ENCODE measurements at regions of chr5 and their contacts with region 1.

Region 1: GRCh38 chr5:75236322-75237316 is at the start of gene ANKRD31:
- DNase-seq: peak; percentile 95
- ATAC-seq: peak; percentile 100
- total RNA-seq, gene ANKRD31: 0.05 TPM

Region 2: GRCh38 chr5:74394528-74394915 is 842.1 kb before region 1 on chr5:
- intact Hi-C with region 1: no loop called
- DNase-seq: no peak
- ATAC-seq: peak; percentile 15

Region 3: GRCh38 chr5:75336625-75337339 is 100.2 kb after region 1 on chr5 and contains the start of gene HMGCR:
- intact Hi-C with region 1: loop called (anchors 2 kb)
- DNase-seq: peak; percentile 99
- ATAC-seq: peak; percentile 100
- total RNA-seq, gene HMGCR: 9.6 TPM

Region 4: GRCh38 chr5:75681125-75681830 is 444.7 kb after region 1 on chr5:
- intact Hi-C with region 1: loop called (anchors 5 kb)
- DNase-seq: no peak
- ATAC-seq: no peak

Region 5: DNA sequence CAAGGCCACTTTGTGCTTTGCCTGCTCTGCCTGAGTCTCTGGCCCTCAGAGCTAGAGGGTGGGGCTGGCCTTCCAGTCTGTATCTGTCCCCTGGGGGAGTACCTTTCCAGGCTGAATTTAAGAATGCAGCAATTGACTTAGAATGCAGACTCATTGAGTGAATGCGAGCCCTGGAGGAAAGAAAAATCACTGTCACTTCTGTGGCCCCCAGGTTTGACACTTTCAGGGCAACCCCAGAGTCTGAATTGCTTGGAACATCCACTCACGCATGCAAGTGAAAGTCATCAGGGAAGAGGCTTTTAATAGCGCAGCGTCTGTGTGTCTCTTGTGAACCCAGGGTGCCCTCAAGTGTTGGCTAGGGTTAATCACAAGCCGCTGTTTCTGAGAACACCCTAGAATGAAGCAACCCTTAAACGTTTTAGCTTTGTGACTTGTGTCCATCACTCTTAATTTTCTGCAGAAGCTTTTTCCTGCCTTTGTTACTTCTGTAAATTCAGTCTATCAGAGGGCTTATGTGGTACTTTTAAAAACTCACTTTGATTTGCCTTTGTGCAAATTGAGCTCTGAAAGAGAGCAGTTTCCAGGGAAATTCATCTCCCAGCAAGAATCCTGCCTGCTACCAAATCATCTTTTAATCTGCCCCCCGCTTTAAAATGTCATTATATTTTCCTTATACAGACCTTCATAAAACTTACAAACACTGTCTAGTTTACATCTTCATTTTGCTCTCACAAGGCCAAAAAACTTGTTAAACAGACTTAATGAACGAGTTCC is 1019.7 kb after region 1 on chr5:
- intact Hi-C with region 1: loop called (anchors 5 kb)
- DNase-seq: no peak
- ATAC-seq: peak; percentile 90